ENCODE measurements at regions of chr7 and their contacts with region 1.

Region 1: GRCh38 chr7:2508327-2509215 is 11.0 kb upstream of the LFNG start:
- DNase-seq: peak; percentile 61 to 94 (median 93)
- ATAC-seq: peak; percentile 76
- H3K4me3 ChIP-seq: peak overlapping the region; percentile 61
- H3K4me3 Mint-ChIP-seq: peak overlapping the region in 9 of 10 donors; percentile 69 to 88 (median 84)
- H3K27ac ChIP-seq: peak overlapping the region; percentile 87
- H3K27ac Mint-ChIP-seq: peak overlapping the region in 7 of 9 donors; percentile 86 to 99 (median 97)
- H3K4me1 ChIP-seq: peaks cover 58 to 61% of the 10 kb centered on the region in 2 donors
- H3K4me1 Mint-ChIP-seq: peaks cover 36 to 69% (median 50%) of the 10 kb centered on the region in 7 donors
- H3K27me3 ChIP-seq: no peaks in the 10 kb centered on the region
- H3K27me3 Mint-ChIP-seq: no peaks in the 10 kb centered on the region

Region 2: GRCh38 chr7:2477447-2478398 is 30.8 kb before region 1 on chr7:
- CTCF ChIA-PET with region 1: interaction called, 5 read pairs
- POLR2A ChIA-PET with region 1: interaction called, 3 read pairs
- intact Hi-C with region 1: loop called in 1 of 2 experiments (anchors 1 kb)
- DNase-seq: peak; percentile 30 to 75 (median 61)
- ATAC-seq: peak; percentile 94
- H3K4me3 ChIP-seq: no peak overlapping the region
- H3K4me3 Mint-ChIP-seq: peak overlapping the region in 1 of 10 donors; percentile 38
- H3K27ac ChIP-seq: no peak overlapping the region
- H3K27ac Mint-ChIP-seq: peak overlapping the region in 1 of 9 donors; percentile 33
- H3K4me1 ChIP-seq: peaks cover 7 to 13% of the 10 kb centered on the region in 2 donors
- H3K4me1 Mint-ChIP-seq: peaks cover 0 to 10% (median 0%) of the 10 kb centered on the region in 7 donors
- H3K27me3 ChIP-seq: no peaks in the 10 kb centered on the region
- H3K27me3 Mint-ChIP-seq: peaks cover 0 to 3% (median 0%) of the 10 kb centered on the region in 5 donors

Region 3: DNA sequence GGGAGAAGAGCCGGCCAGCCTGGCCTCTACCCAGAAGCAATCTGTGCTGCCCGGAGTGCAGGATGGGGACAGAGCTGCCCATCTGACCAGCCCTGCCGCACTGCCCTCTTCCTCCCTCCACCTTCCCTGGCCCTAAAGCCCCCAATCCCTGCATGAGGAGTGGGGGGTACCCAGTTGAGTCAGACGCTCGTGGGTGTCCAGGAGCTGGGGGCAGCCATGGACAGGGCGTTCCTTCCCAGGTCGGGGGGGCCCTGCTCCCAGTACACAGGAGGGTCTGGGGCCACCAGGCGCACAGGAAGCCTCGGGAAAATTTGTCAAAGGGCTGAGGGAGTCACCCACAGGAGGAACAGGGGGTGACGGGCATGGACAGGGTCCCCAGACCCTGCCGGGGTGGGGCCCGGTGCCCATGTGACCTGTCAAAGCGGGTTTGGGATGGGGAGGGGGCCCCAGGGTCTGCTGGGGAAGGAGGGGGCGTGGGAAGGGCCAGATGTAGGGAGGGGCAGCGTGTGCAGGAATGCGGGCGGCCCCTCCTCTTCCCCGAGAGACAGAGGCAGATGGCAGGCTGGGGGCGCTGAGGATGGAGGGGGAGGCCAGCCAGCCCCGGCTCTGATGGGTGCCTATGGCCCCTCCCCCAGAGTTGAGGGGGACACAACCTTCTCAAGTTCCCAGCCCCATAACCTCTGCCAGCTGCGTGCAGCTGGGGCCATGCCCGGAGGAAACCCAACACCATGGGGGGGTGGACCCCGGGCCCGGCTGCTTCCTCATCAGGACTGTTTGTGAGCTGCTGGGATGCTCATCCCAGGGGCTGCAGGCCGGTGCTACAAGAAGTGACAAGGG is 10.9 kb before region 1 on chr7:
- CTCF ChIA-PET with region 1: interaction called, 3 read pairs
- POLR2A ChIA-PET with region 1: interaction called, 10 read pairs
- intact Hi-C with region 1: no loop called
- DNase-seq: no peak
- ATAC-seq: no peak
- H3K4me3 ChIP-seq: no peak overlapping the region
- H3K4me3 Mint-ChIP-seq: no peak overlapping the region
- H3K27ac ChIP-seq: no peak overlapping the region
- H3K27ac Mint-ChIP-seq: no peak overlapping the region
- H3K4me1 ChIP-seq: no peaks in the 10 kb centered on the region
- H3K4me1 Mint-ChIP-seq: peaks cover 0 to 9% (median 0%) of the 10 kb centered on the region in 7 donors
- H3K27me3 ChIP-seq: no peaks in the 10 kb centered on the region
- H3K27me3 Mint-ChIP-seq: peaks cover 0 to 11% (median 0%) of the 10 kb centered on the region in 5 donors

Region 4: GRCh38 chr7:2519119-2519930 is 10.8 kb after region 1 on chr7 and contains the start of gene LFNG:
- CTCF ChIA-PET with region 1: interaction called, 3 read pairs
- POLR2A ChIA-PET with region 1: interaction called, 401 read pairs
- intact Hi-C with region 1: loop called (anchors 1 kb)
- DNase-seq: peak; percentile 64 to 93 (median 77)
- ATAC-seq: peak; percentile 89
- H3K4me3 ChIP-seq: peak within 1 kb of the TSS; percentile 94
- H3K4me3 Mint-ChIP-seq: peak within 1 kb of the TSS; percentile 94 to 99 (median 96)
- H3K27ac ChIP-seq: peak within 1 kb of the TSS; percentile 78
- H3K27ac Mint-ChIP-seq: peak within 1 kb of the TSS; percentile 80 to 92 (median 88)
- H3K4me1 ChIP-seq: peaks cover 20 to 25% of the 10 kb centered on the region in 2 donors
- H3K4me1 Mint-ChIP-seq: peaks cover 14 to 33% (median 30%) of the 10 kb centered on the region in 7 donors
- H3K27me3 ChIP-seq: no peaks in the 10 kb centered on the region
- H3K27me3 Mint-ChIP-seq: peaks cover 0 to 11% (median 0%) of the 10 kb centered on the region in 5 donors
- total RNA-seq, gene LFNG: 114 to 246 (median 151) TPM

Region 5: DNA sequence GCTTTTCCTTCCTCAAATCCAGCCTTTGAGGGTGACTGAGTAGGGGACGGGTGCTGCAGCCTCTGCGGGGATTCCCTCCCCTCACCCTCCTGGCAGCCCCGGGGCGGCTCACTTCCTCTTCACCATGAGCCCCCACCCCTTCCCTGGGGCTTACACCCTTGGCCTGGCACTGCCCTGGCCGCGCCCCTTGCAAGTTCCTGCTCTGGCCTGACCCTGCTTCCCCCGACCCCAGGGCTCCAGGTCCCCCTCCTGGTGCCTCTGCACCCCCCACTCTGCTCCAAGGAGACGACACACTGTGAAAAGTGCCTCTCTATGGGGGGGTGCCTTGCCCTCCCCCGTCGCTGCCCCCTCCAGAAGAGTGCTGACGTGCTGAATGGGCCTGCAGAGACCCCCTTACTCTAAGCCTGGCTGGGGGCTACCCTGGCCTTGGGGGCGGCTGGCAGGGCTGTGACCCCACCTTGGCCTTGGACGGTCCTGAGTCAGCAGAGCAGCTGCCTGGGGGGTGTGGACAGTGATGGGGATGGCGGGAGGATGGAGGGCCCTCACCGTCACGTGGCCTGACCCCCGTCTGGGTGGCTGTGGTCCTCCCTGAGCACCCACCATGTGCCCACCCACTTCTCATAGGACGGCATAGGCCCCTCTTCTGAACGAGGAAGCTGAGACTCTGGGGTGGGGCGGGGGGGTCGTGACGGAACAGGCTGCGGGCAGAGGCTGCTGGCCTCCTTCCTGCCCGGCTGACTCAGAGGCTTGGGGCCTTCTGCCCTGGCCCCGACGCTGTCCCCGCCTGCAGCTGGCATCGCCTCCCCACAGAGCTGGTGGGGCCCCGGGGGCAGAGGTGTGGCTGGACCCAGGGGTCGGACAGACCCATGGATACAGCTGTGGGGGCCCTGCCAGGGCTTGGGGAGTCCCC is 20.8 kb after region 1 on chr7:
- CTCF ChIA-PET with region 1: interaction called, 4 read pairs
- POLR2A ChIA-PET with region 1: interaction called, 401 read pairs
- intact Hi-C with region 1: loop called in 1 of 2 experiments (anchors 1 kb)
- DNase-seq: peak in 7 of 9 donors; percentile 24 to 76 (median 52)
- ATAC-seq: peak; percentile 67
- H3K4me3 ChIP-seq: peak overlapping the region; percentile 57
- H3K4me3 Mint-ChIP-seq: peak overlapping the region; percentile 65 to 82 (median 76)
- H3K27ac ChIP-seq: peak overlapping the region; percentile 76
- H3K27ac Mint-ChIP-seq: peak overlapping the region; percentile 66 to 96 (median 91)
- H3K4me1 ChIP-seq: peaks cover 40 to 62% of the 10 kb centered on the region in 2 donors
- H3K4me1 Mint-ChIP-seq: peaks cover 33 to 58% (median 44%) of the 10 kb centered on the region in 7 donors
- H3K27me3 ChIP-seq: no peaks in the 10 kb centered on the region
- H3K27me3 Mint-ChIP-seq: no peaks in the 10 kb centered on the region

Region 6: DNA sequence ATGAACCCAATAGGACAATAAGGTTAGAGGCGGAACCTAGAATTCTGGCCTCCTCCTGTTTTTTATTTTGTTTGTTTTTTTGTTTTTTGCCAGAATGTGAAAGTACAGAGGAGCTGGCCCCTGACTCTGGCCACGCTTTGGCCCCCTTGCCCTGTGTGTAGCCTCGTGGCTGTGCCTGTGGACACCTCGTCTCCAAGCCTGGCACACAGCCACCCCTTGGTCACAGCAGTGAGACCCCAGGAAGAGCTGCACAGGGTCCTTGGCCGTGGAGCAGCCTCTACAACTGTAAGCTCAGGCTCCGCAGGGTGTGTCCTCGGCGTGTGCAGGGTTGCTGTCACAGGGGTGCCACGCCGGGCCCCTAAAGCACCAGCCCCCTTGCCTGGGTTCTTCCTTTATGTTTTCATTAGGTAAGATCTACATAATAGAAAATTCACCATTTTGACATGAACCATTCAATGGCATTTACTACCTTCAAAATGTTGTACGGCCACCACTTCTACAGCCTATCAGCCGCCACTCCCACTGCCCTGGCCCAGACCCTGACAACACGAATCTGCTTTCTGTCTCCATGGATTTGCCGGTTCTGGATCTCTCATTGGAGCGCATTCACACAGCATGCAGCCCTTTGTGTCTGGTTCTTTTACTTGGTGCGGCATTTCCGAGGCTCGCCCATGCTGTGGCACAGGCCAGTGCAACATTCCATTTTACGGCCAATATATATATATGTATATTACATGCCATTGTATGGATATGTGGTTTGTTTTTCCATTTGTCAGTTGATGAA is 230.4 kb after region 1 on chr7:
- CTCF ChIA-PET with region 1: no interaction called
- POLR2A ChIA-PET with region 1: no interaction called
- intact Hi-C with region 1: no loop called
- DNase-seq: no peak
- ATAC-seq: no peak
- H3K4me3 ChIP-seq: no peak overlapping the region
- H3K4me3 Mint-ChIP-seq: no peak overlapping the region
- H3K27ac ChIP-seq: no peak overlapping the region
- H3K27ac Mint-ChIP-seq: no peak overlapping the region
- H3K4me1 ChIP-seq: peaks cover 0 to 10% of the 10 kb centered on the region in 2 donors
- H3K4me1 Mint-ChIP-seq: peaks cover 12 to 34% (median 26%) of the 10 kb centered on the region in 7 donors
- H3K27me3 ChIP-seq: no peaks in the 10 kb centered on the region
- H3K27me3 Mint-ChIP-seq: no peaks in the 10 kb centered on the region

Region 7: DNA sequence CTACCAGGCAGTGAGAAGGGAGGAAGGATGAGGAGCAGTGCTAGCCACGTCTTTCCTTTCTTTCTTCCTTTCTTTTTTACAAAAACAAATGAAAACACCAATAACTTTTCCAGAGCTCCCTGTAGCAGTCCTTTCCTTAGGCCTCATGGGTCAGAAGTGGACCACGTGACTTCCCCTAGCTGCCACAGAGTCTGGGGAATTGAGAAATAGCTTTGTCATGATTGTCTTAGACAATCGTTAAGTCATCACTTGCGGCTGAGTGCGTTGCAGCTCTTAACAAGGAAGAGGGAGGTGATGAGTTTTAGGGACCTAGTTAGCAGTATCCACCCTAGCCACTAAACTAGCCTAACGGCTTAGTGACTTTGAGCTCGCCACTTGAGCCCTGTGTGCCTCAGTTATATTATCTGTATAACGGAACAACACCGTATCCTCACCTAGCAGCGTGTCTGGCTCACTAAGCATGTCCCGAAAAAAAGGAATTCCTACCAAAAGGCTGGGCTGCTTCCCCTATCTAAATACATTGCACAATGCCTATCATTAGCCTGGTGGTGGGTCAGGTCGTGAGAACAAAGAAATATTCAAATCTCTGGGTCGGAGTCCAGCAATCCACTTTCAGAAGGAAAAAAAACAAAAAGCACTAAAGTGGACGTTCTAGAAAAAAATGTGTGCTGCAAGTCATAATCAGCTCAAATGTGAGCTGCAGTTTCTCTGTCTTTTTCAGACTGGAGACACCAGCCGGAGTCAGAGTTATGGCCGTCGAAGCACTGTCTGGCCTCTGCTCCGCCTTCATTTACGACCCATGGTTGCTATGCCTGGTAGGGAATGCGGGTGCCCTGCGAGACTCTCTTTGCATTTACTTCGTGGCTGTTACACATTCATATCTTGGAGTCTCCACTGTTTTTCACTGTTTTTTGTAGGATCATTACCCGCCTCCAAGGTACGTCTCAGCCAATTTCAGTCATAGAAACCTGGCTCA is 1835.0 kb after region 1 on chr7:
- CTCF ChIA-PET with region 1: no interaction called
- POLR2A ChIA-PET with region 1: no interaction called
- intact Hi-C with region 1: no loop called
- DNase-seq: no peak
- ATAC-seq: no peak
- H3K4me3 ChIP-seq: no peak overlapping the region
- H3K4me3 Mint-ChIP-seq: no peak overlapping the region
- H3K27ac ChIP-seq: no peak overlapping the region
- H3K27ac Mint-ChIP-seq: no peak overlapping the region
- H3K4me1 ChIP-seq: no peaks in the 10 kb centered on the region
- H3K4me1 Mint-ChIP-seq: no peaks in the 10 kb centered on the region
- H3K27me3 ChIP-seq: no peaks in the 10 kb centered on the region
- H3K27me3 Mint-ChIP-seq: peaks cover 0 to 19% (median 12%) of the 10 kb centered on the region in 5 donors